ENCODE measurements at regions of chr5 and their contacts with region 1.

Region 1: DNA sequence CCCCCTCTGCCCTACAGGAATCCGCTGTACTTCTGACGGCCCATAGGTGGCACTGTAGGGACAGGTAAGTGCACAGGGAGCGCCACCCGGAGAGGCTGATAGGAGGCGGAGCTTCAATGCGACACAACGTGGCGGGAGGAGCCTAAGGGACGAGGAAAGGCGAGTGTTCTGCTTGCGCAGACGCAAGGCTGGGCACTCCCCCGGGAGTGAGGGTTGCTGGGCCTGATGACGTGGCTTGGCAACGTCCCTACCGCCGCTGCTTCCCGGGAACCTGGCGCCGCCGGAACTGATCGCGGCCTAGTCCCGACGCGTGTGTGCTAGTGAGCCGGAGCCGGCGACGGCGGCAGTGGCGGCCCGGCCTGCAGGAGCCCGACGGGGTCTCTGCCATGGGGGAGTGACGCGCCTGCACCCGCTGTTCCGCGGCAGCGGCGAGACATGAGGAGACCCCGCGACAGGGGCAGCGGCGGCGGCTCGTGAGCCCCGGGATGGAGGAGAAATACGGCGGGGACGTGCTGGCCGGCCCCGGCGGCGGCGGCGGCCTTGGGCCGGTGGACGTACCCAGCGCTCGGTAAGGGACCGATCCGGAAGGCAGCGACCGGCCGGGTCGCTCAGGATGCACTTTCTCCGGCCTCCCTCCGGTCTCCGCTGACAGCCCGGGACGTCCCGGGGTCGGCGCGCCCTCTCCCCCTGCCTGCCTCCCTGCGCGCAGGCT is at the start of gene SLC30A5:
- DNase-seq: peak; percentile 100
- H3K4me3 ChIP-seq: peak within 1 kb of the TSS; percentile 81 to 96 (median 88)
- H3K27ac ChIP-seq: peak within 1 kb of the TSS; percentile 90 to 98 (median 96)
- H3K4me1 ChIP-seq: peaks cover 0 to 26% (median 17%) of the 10 kb centered on the region in 4 donors
- H3K27me3 ChIP-seq: no peaks in the 10 kb centered on the region
- CTCF ChIP-seq: peak; percentile 82 to 93 (median 90)
- EP300 ChIP-seq: no peak
- POLR2A ChIP-seq: peak in 1 of 2 donors; percentile 75
- total RNA-seq, gene SLC30A5: 37.2 to 56.4 (median 44.4) TPM

Region 2: DNA sequence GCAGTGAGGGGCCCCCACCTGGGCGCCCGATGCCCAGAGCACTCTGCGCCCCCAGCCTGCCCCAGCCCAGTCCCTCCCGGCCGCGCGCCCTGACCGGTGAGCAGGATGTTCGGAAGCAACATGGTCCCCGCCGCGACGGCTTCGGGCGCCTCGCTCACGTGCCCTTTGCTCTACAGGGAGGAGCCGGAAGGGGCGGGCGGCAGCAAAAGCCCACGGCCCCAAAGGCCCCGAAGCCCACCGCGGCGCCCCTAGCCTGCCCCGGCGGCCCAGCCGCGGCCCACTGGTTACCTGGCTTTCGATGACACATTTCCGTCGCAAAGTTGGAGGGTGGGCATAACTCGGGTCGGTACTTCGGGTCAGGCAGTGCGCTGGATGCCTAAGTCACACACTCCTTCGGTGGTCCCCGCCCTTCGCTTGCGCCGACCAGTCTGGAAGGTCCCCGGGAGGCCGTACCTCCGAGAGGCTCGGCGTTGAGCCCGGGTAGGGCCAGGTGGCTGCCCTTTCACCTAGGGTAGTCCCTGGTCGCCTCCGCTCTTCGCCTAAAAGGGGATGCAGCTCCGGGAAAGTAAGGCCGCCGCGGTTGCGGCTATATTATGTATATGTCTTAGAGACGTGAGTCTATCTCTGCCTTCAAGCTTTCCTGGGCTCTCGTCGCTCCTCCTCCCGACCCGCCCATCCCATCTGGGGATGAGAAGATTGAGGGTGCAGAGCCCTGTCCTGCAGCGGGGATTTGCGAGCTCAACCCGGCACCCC is 275.6 kb after region 1 on chr5 and contains the starts of genes AK6, RAD17 and TAF9:
- intact Hi-C with region 1: loop called (anchors 2 kb)
- DNase-seq: peak; percentile 94
- H3K4me3 ChIP-seq: peak within 1 kb of the TSS; percentile 67 to 87 (median 78)
- H3K27ac ChIP-seq: peak within 1 kb of the TSS; percentile 93 to 96 (median 94)
- H3K4me1 ChIP-seq: peaks cover 0 to 35% (median 22%) of the 10 kb centered on the region in 4 donors
- H3K27me3 ChIP-seq: no peaks in the 10 kb centered on the region
- CTCF ChIP-seq: no peak
- EP300 ChIP-seq: no peak
- POLR2A ChIP-seq: peak; percentile 41 to 66
- total RNA-seq, gene AK6: 20.7 to 34.1 (median 28.5) TPM
- total RNA-seq, gene RAD17: 18.3 to 25.3 (median 19.5) TPM
- total RNA-seq, gene TAF9: 33.2 to 52.8 (median 38.6) TPM

Measured in sigmoid colon (tissue), 7 donors.